ENCODE measurements at regions of chr6 and their contacts with region 1.

Region 1: DNA sequence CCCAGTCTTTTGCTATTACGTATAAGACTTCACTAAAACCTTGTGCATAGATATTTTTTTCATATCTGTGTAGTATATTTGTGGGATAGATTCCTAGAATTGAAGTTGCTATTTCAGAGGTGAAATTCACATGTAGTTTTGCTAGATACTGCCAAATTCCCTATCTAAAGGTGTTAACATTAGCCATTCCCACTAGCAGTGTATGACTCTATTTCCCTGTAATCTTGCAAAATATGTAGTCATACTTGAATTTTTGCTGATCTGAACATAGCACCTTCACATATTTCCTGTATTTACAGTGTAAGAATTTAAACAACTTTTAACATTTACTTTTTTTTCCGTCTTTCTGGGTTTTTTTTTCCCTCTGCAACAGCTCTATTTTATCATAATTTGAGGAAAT is 24.9 kb downstream of the SENP6 start:
- H3K4me3 ChIP-seq: no peak overlapping the region
- H3K27ac ChIP-seq: no peak overlapping the region
- H3K4me1 ChIP-seq: peaks cover 6% of the 10 kb centered on the region
- CTCF ChIP-seq: no peak

Region 2: DNA sequence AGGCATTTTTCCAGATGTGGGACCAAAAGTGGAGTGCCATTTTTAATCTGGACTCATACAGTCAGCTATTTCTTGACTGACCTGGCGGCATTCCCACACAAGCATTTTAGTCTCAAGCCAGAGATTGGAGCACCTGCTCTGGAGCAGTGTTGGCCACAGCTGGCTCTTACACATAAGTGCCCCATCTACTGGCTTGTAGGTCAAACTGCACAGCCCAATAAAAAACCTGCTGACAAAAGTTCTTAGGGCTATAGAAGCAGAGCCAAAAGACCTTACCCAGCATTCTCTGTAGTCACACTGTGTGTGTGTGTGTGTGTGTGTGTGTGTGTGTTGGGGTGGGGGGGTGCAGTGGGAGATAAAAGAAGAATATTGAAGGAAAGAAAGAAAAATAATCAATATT is 63.5 kb before region 1 on chr6:
- CTCF ChIA-PET with region 1: no interaction called
- POLR2A ChIA-PET with region 1: interaction called, 10 read pairs
- H3K4me3 ChIP-seq: no peak overlapping the region
- H3K27ac ChIP-seq: no peak overlapping the region
- H3K4me1 ChIP-seq: no peaks in the 10 kb centered on the region
- CTCF ChIP-seq: no peak